ENCODE measurements at regions of chr1 and their contacts with region 1.

Region 1: DNA sequence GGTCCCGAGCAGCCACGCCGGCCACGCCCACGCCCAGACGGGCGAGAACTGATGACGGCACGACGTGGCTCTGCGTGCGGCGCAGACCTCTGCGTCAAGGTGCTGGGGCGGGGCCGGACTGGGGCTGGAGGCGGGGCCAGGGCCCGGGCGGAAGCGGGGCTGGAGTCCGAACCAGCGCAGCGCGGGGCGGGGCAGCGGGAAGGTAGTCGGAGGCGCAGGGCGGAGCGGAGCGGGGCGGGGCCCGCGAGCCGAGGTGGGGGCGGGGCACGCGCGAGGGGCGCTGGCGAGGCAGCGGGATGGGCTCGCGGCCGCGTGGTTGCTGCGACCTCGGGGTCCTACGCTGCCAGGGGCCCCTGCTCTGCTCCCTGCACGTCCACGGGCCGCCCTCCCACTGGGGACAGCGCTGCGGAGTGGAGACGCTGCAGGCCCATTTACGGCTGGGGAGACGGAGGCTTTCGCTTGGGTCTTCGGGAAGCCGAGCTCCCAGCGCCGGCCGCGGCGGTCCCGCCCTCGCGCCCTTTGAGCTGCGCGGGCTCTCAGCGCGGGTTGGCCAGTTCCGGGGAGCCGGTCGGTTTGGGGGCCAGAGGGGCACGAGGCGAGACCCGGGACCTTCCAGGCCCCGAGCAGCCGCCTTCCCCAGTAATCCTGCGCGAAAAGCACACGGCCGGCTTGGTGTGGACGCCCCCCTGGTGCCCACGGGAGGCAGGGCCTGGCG is at the start of gene PEX10:
- DNase-seq: peak; percentile 98
- ATAC-seq: peak; percentile 92 to 98 (median 93)
- H3K4me3 ChIP-seq: peak within 1 kb of the TSS; percentile 56
- H3K4me3 Mint-ChIP-seq: peak within 1 kb of the TSS; percentile 86
- H3K27ac ChIP-seq: peak within 1 kb of the TSS; percentile 70
- H3K27ac Mint-ChIP-seq: peak within 1 kb of the TSS; percentile 66 to 90
- H3K4me1 ChIP-seq: peaks cover 55% of the 10 kb centered on the region
- H3K4me1 Mint-ChIP-seq: peaks cover 23 to 38% of the 10 kb centered on the region in 2 donors
- H3K27me3 ChIP-seq: no peaks in the 10 kb centered on the region
- H3K27me3 Mint-ChIP-seq: no peaks in the 10 kb centered on the region
- CTCF ChIP-seq: no peak
- total RNA-seq, gene PEX10: 8.1 to 11.1 (median 9.8) TPM

Region 2: GRCh38 chr1:2429780-2430591 is 17.3 kb after region 1 on chr1:
- intact Hi-C with region 1: no loop called
- DNase-seq: peak in 1 of 2 donors; percentile 26
- ATAC-seq: no peak
- H3K4me3 ChIP-seq: no peak overlapping the region
- H3K4me3 Mint-ChIP-seq: no peak overlapping the region
- H3K27ac ChIP-seq: no peak overlapping the region
- H3K27ac Mint-ChIP-seq: no peak overlapping the region
- H3K4me1 ChIP-seq: peaks cover 12% of the 10 kb centered on the region
- H3K4me1 Mint-ChIP-seq: peaks cover 0 to 15% of the 10 kb centered on the region in 2 donors
- H3K27me3 ChIP-seq: no peaks in the 10 kb centered on the region
- H3K27me3 Mint-ChIP-seq: no peaks in the 10 kb centered on the region
- CTCF ChIP-seq: no peak

Region 3: DNA sequence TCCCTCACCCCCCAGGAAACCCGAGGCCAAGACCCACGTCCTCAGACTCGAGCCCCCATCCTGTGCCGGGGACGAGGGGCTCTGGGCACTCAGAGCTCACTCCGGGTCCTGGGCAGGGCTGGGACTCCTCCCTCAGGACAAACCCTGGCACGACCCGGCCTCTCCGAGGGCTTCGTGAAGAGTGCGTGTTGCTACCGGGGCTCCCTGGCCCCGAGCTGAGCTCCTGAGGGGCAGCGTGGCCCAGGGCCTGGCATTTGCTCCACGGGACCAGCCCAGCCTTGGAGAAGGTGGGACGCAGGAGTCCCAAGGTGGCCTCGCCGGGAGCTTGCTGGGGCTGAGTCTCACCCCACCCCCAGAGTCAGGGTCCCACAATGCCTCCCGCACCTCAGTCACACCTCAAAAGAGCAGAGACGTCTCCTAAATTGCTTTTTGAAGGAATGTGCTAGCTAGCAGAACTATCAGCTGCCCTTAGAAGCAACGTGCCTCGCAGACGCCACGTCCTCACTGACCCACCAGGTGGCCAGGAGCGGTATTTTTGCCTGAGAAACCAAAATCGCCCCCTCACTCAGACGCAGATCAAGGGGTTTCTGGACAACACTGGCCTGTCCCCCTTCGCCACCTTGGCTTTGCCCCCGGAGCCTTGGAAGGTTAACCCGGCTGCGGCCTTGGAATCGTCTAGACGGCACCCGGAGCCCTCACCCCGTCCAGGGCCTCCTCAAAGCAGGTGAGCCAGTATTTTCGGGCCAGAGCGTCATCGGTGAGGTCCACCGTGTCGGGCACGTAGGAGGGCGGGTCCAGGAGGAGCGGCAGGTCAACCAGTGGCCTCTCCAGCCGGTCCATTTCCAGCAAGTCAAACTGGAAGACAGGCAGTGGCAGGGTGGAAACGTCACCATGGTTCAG is 102.4 kb after region 1 on chr1:
- intact Hi-C with region 1: no loop called
- DNase-seq: no peak
- ATAC-seq: no peak
- H3K4me3 ChIP-seq: no peak overlapping the region
- H3K4me3 Mint-ChIP-seq: no peak overlapping the region
- H3K27ac ChIP-seq: no peak overlapping the region
- H3K27ac Mint-ChIP-seq: no peak overlapping the region
- H3K4me1 ChIP-seq: no peaks in the 10 kb centered on the region
- H3K4me1 Mint-ChIP-seq: no peaks in the 10 kb centered on the region
- H3K27me3 ChIP-seq: no peaks in the 10 kb centered on the region
- H3K27me3 Mint-ChIP-seq: no peaks in the 10 kb centered on the region
- CTCF ChIP-seq: no peak

Region 4: DNA sequence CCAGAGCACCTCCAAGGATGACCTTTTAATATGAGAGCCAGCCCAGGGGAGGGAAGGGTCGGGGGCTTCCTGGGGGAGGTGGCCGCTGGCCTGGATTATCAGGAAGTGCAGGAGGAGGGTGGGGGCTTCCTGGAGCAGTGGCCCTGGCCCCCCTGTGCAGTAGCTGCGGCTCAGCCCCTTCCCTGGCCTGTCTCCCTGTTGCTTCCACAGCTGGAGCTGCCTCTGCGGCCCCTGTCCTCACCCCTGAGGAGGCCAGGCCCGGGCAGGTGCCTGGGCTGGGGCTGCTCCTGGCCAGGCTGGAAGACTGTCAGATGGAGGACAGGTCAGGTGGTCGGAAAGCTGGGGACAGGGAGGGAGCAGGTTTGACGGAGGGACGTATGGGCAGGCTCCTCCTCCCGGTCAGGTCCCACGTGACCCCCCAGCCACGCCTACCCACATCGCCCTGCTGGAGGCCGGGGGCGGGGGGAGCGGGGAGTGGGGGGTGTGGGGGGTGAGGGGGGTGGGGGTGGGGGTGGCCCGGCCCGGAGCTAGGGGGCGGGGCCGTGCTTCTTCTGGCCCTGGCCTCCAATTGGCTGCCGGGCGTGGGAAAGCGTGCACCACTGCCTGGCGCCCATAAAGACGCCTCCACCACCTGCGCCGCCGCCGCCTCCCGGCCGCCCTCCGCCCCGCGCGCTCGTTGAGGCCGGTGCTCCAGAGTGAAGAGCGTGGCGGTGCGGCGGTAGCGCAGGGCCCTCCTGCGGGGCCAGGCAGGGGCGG is 133.3 kb after region 1 on chr1:
- intact Hi-C with region 1: loop called (anchors 1 kb)
- DNase-seq: peak; percentile 85 to 95
- ATAC-seq: peak; percentile 52 to 75 (median 65)
- H3K4me3 ChIP-seq: peak overlapping the region; percentile 93
- H3K4me3 Mint-ChIP-seq: peak overlapping the region; percentile 94
- H3K27ac ChIP-seq: peak overlapping the region; percentile 97
- H3K27ac Mint-ChIP-seq: peak overlapping the region; percentile 94 to 97
- H3K4me1 ChIP-seq: peaks cover 68% of the 10 kb centered on the region
- H3K4me1 Mint-ChIP-seq: peaks cover 0 to 31% of the 10 kb centered on the region in 2 donors
- H3K27me3 ChIP-seq: no peaks in the 10 kb centered on the region
- H3K27me3 Mint-ChIP-seq: no peaks in the 10 kb centered on the region
- CTCF ChIP-seq: no peak

Region 5: GRCh38 chr1:2642560-2643413 is 230.1 kb after region 1 on chr1:
- intact Hi-C with region 1: loop called (anchors 1 kb)
- DNase-seq: peak; percentile 95 to 97
- ATAC-seq: peak; percentile 85 to 87 (median 86)
- H3K4me3 ChIP-seq: peak overlapping the region; percentile 70
- H3K4me3 Mint-ChIP-seq: peak overlapping the region; percentile 86
- H3K27ac ChIP-seq: peak overlapping the region; percentile 96
- H3K27ac Mint-ChIP-seq: peak overlapping the region; percentile 80 to 97
- H3K4me1 ChIP-seq: peaks cover 22% of the 10 kb centered on the region
- H3K4me1 Mint-ChIP-seq: peaks cover 10 to 18% of the 10 kb centered on the region in 2 donors
- H3K27me3 ChIP-seq: no peaks in the 10 kb centered on the region
- H3K27me3 Mint-ChIP-seq: peaks cover 0 to under 1% of the 10 kb centered on the region in 2 donors
- CTCF ChIP-seq: no peak

Region 6: GRCh38 chr1:2840036-2840809 is 427.5 kb after region 1 on chr1:
- intact Hi-C with region 1: loop called (anchors 5 kb)
- DNase-seq: peak in 1 of 2 donors; percentile 85
- ATAC-seq: peak; percentile 65 to 87 (median 82)
- H3K4me3 ChIP-seq: no peak overlapping the region
- H3K4me3 Mint-ChIP-seq: peak overlapping the region; percentile 58
- H3K27ac ChIP-seq: peak overlapping the region; percentile 8
- H3K27ac Mint-ChIP-seq: peak overlapping the region; percentile 53 to 66
- H3K4me1 ChIP-seq: peaks cover 12% of the 10 kb centered on the region
- H3K4me1 Mint-ChIP-seq: peaks cover 21 to 22% of the 10 kb centered on the region in 2 donors
- H3K27me3 ChIP-seq: no peaks in the 10 kb centered on the region
- H3K27me3 Mint-ChIP-seq: peaks cover 12 to 19% of the 10 kb centered on the region in 2 donors
- CTCF ChIP-seq: peak; percentile 26